Activated CD8-positive, alpha-beta T cell treated with anti-CD3 and anti-CD28 coated beads for 36 hours (primary cell): ENCODE measurements at regions of chr7 and their contacts with region 1.

Region 1: DNA sequence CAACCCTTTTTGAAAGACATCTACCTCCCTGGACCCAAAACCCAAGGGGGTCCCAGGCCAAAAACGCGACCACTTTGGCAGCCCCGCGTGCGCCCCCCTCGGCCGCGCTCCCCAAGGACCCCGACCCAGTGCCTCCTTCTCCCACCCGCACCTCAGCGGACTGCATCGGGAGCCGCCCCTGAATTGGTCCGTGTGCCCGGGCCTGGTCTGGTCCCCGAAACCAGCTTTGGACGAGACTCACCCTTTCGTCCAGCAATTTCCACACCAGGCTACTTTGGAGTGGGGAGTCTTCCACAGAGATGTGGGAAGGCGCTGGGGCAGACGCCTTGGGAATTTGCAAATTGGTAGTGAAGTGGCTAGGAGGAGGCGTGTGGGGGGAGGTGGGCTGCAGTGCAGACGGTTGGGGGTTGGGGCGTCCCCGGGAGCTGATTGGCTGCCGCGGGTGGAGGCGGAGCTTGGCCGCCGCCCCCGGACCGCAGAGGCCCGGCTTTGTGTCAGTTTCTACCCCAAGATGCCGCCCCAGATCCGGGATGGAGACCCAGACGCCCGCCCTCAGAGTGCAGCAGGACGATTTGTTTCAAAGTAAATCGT is 16.9 kb downstream of the TCAF1 start:
- DNase-seq: peak; percentile 59
- ATAC-seq: peak; percentile 75
- H3K4me3 Mint-ChIP-seq: peak overlapping the region; percentile 52
- H3K27ac Mint-ChIP-seq: no peak overlapping the region
- H3K4me1 Mint-ChIP-seq: peaks cover 21% of the 10 kb centered on the region
- H3K27me3 Mint-ChIP-seq: peaks cover 32% of the 10 kb centered on the region
- CTCF ChIP-seq: no peak

Region 2: GRCh38 chr7:143901668-143902331 is 16.7 kb after region 1 on chr7 and contains the start of gene TCAF1:
- CTCF ChIA-PET with region 1: interaction called, 14 read pairs
- POLR2A ChIA-PET with region 1: interaction called, 18 read pairs
- intact Hi-C with region 1: no loop called
- DNase-seq: peak; percentile 96
- ATAC-seq: peak; percentile 93
- H3K4me3 Mint-ChIP-seq: peak within 1 kb of the TSS; percentile 90
- H3K27ac Mint-ChIP-seq: peak within 1 kb of the TSS; percentile 92
- H3K4me1 Mint-ChIP-seq: peaks cover 30% of the 10 kb centered on the region
- H3K27me3 Mint-ChIP-seq: no peaks in the 10 kb centered on the region
- CTCF ChIP-seq: peak; percentile 30
- total RNA-seq, gene TCAF1: 13.8 to 14.7 TPM